Sigmoid colon (tissue), 7 donors: ENCODE measurements at regions of chr11 and their contacts with region 1.

Region 1: DNA sequence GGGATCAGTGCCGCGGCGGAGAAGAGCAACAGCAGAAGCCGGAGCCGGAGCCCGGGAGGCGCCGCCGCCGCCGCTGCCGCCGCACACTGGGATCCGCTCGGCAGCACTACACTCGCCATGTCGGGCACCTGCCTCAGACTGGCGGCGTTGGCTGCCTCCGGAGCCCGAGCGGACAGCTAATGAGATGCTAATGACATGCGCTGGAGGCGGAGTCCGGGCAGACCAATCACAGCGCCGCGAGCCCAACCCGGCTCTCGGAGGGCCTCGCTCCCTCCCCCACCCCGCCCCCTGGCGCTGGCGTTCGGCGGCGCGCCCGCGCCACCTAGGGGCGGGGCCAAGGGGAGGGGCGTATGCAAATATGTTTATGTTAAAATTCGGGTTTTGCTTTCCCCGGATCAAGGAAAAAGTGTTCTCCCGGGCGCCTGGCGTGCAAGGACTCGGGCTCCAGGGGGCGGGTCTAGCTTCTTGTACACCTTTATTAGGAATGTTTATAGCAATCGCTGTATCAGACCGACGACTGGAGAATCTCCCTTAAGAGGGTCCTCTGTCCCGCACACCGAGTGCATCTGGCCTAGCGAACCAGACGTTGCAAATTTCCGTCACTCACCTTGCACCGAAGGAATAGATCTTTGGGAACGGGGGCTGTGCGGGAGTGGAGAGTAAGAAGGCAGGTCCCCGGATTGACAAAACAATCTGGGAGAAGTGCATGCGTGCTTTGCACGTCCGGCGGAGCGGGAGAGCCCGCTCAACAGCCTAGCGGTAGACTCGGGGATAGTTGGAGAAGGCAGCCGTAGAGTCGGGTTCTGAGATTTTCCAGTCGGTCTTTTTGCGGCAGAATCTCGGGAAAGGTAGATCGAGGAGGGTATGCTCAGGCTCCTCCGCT is at the start of gene CADM1:
- DNase-seq: peak; percentile 97
- H3K4me3 ChIP-seq: peak within 1 kb of the TSS; percentile 55 to 70 (median 66)
- H3K27ac ChIP-seq: peak within 1 kb of the TSS; percentile 71 to 88 (median 86)
- H3K4me1 ChIP-seq: peaks cover 0 to 32% (median 23%) of the 10 kb centered on the region in 4 donors
- H3K27me3 ChIP-seq: peaks cover 0 to 27% (median 0%) of the 10 kb centered on the region in 3 donors
- CTCF ChIP-seq: peak; percentile 28 to 72 (median 56)
- EP300 ChIP-seq: no peak
- POLR2A ChIP-seq: peak; percentile 55 to 66
- total RNA-seq, gene CADM1: 15.6 to 25.2 (median 20.2) TPM

Region 2: DNA sequence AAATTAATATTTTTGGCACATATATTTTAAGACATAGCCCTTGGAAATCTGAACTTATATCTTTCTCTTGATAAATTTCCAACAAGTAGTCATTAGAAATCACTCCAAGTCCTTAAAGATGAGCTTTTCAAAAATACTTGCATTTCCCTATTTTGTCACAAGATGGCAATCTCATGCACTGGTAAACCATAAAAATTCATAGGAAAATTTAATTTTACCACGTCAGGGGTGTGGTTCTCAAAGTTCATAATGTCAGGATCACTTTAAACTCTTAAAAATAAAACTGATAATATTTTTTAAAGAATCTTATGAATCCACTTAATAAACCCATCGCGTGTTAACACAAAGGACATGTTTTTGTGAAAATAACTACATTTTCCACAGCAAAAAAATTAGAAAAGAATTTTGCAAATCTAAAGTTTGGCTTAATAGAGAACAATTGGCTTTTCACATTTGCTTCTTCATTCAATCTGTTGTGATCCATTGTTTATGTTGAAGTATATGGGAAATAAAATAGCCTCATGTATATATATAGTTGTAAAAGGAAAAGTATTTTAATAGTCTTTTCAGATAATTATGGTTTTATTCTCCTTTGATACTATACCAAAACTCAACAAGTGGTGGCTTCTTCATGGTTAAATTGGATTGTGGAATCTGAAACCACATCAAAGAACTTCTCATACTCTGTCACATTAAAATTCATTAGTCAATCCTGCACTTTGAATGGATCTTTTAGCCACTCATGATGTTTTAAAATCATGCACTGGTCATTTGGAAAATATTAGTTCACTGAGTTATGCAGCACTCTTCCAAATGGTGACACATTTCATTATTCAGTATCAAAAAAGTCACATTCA is 169.4 kb before region 1 on chr11:
- intact Hi-C with region 1: loop called (anchors 1 kb)
- DNase-seq: no peak
- H3K4me3 ChIP-seq: no peak overlapping the region
- H3K27ac ChIP-seq: no peak overlapping the region
- H3K4me1 ChIP-seq: no peaks in the 10 kb centered on the region
- H3K27me3 ChIP-seq: no peaks in the 10 kb centered on the region
- CTCF ChIP-seq: peak; percentile 41 to 72 (median 52)
- EP300 ChIP-seq: no peak
- POLR2A ChIP-seq: no peak

Region 3: GRCh38 chr11:115409691-115410220 is 94.8 kb before region 1 on chr11:
- intact Hi-C with region 1: loop called (anchors 10 kb)
- DNase-seq: no peak
- H3K4me3 ChIP-seq: no peak overlapping the region
- H3K27ac ChIP-seq: no peak overlapping the region
- H3K4me1 ChIP-seq: peaks cover 0 to 25% (median 14%) of the 10 kb centered on the region in 4 donors
- H3K27me3 ChIP-seq: no peaks in the 10 kb centered on the region
- CTCF ChIP-seq: no peak
- EP300 ChIP-seq: no peak
- POLR2A ChIP-seq: no peak

Region 4: DNA sequence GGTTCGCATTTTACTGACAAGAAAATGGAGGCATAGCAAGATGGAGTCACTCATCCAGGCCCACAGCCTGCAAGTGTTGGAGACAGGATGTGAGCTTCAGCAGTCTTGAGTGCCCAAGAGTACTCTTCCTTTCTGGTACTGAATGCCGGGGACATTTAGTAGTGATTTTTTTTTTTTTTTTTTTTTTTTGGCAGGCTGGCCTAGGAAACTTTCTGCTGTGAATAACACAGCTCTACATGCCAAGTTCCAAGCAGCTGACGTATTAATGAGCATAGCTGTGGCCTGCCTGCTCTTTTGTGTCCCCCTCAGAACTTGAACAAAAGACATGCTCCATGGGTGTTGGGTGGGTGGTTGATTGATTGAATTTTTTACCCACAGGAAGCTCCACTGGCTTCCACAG is 195.2 kb after region 1 on chr11:
- intact Hi-C with region 1: loop called (anchors 10 kb)
- DNase-seq: peak; percentile 82
- H3K4me3 ChIP-seq: no peak overlapping the region
- H3K27ac ChIP-seq: peak overlapping the region; percentile 58 to 76 (median 72)
- H3K4me1 ChIP-seq: peaks cover 0 to 33% (median 27%) of the 10 kb centered on the region in 4 donors
- H3K27me3 ChIP-seq: no peaks in the 10 kb centered on the region
- CTCF ChIP-seq: no peak
- EP300 ChIP-seq: peak in 2 of 4 donors; percentile 41 to 51
- POLR2A ChIP-seq: no peak

Region 5: GRCh38 chr11:115759622-115760460 is 255.3 kb after region 1 on chr11:
- intact Hi-C with region 1: loop called (anchors 2 kb)
- DNase-seq: peak; percentile 68
- H3K4me3 ChIP-seq: peak overlapping the region; percentile 50 to 80 (median 72)
- H3K27ac ChIP-seq: peak overlapping the region; percentile 38 to 66 (median 54)
- H3K4me1 ChIP-seq: peaks cover 0 to 22% (median 15%) of the 10 kb centered on the region in 4 donors
- H3K27me3 ChIP-seq: no peaks in the 10 kb centered on the region
- CTCF ChIP-seq: no peak
- EP300 ChIP-seq: no peak
- POLR2A ChIP-seq: no peak